Left cardiac atrium (tissue), 4 donors: ENCODE measurements at regions of chr1 and their contacts with region 1.

Region 1: GRCh38 chr1:210360852-210361477 is 32.3 kb downstream of the HHAT start:
- DNase-seq: no peak
- ATAC-seq: peak; percentile 51 to 67

Region 2: DNA sequence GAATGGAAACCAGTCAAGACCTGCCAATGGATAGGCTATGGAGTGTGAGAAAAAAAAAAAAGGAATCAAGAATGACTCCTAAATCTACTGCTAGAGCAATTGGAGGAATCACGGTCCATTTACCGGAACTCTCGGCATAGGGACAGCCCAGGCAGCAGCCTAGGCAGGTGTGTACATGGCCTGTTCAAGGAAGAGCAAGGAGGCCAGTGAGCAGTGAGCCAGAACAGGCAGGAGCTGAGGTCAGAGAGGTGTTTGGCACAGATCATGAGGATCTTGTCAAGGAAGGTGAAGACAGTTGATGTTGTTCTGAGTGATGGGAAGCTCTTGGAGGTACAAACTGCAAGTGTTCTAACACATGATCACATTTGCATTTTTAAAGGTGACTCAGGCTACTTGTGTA is 72.9 kb before region 1 on chr1:
- intact Hi-C with region 1: no loop called
- DNase-seq: no peak
- ATAC-seq: no peak

Region 3: DNA sequence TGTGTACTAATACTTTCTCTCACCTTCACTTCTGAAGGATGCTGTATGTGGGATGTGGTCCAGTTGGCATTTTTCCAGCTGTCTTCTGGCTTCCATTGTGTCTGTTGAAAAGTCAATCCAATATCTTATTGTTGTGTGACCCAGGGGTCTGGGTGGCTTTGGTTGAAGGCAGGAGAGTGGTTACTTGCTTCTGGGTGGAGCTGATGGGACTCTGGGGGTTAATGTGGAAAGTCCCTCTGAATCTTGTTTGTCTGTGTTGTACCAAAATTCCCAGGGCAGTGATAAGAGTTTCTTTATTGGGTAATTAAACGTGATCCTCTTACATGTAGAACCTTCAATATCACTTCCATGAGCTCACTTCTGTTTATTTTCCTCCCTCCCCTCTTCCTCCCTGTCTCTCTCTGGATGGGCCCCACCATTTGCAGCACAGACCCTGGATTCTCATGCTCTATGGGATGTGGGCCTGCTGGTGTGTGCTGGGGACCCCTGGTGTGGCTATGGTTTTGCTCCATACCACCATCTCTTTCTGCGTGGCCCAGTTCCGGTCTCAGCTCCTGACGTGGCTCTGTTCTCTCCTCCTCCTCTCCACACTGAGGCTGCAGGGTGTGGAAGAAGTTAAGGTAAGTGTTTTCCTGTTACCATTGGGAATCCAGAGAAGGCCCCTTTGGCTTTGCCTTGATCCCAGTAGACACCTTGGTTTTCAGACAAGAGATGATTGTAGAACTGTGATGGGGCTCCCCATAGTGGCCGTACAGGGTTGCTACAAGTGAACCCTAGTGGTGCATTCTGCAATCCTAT is 39.3 kb after region 1 on chr1:
- intact Hi-C with region 1: loop called in 1 of 2 experiments (anchors 5 kb)
- DNase-seq: peak; percentile 49
- ATAC-seq: peak; percentile 93 to 96